ENCODE measurements at regions of chr1 and their contacts with region 1.

Region 1: DNA sequence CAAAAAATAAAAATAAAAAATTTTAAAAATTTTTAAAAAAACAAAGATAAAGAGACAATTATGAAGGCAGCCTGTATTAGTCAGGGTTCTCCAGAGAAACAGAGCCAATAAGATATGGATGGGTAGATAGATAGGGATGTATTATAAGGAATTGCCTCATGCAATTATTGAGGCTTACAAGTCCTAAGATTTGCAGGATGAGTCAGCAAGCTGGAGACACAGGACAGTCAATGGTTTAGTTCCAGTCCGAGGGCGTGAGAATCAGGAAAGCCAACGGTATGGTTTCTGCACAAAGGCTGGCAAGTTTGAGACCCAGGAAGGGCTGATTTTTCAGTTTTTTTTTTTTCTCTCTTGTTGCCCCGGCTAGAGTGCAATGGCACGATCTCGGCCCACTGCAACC is 24.1 kb upstream of the EIF4G3 start:
- DNase-seq: no peak
- H3K4me3 ChIP-seq: no peak overlapping the region
- H3K27ac ChIP-seq: no peak overlapping the region
- H3K4me1 ChIP-seq: no peaks in the 10 kb centered on the region
- H3K27me3 ChIP-seq: peaks cover 0 to 4% of the 10 kb centered on the region in 2 experiments
- CTCF ChIP-seq: no peak
- POLR2A ChIP-seq: no peak

Region 2: DNA sequence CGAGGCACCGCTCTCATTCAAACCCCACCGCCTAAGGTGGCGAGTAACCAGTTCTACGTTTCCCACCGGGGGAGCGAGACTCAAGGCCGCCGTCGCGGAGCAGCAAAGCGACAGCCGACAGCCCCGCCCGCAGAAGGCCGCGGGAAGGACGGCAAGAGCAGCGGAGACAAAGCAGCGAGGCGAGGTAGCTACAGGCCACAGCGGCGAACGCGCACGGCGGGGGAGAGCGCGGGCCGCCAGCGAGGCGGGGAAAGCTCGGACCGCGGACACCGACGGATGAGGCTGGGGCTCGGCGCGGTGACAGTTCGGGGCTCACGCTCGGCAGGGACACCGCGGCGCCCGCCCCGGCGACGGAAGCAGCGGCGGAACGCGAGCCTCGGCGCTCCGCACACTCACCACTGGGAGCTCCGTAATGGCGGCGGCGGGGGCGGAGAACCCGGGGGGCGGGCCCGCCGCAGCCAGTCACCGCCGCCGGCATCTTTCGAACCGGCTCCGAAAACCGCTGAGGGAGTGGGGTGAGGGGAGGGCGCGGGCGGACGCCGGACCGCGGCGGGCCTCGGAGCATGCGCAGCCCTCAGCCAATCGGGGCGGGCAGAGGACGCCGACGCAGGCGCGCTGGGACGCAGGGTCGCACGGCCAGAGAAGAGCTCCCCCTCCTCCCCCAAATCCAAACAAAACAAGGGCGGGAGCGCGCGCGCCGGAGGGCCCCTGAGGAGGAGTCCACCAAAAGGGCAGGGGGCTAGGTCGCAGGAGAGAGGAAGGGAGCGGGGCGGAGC is 414.3 kb before region 1 on chr1:
- CTCF ChIA-PET with region 1: interaction called, 49 read pairs
- POLR2A ChIA-PET with region 1: no interaction called
- dilution Hi-C with region 1: no loop called
- intact Hi-C with region 1: loop called (anchors 1 kb)
- DNase-seq: peak; percentile 96
- H3K4me3 ChIP-seq: peak overlapping the region; percentile 32 to 90 (median 83)
- H3K27ac ChIP-seq: peak overlapping the region; percentile 89
- H3K4me1 ChIP-seq: peaks cover 13% of the 10 kb centered on the region
- H3K27me3 ChIP-seq: no peaks in the 10 kb centered on the region
- CTCF ChIP-seq: no peak
- POLR2A ChIP-seq: peak; percentile 69

Region 3: DNA sequence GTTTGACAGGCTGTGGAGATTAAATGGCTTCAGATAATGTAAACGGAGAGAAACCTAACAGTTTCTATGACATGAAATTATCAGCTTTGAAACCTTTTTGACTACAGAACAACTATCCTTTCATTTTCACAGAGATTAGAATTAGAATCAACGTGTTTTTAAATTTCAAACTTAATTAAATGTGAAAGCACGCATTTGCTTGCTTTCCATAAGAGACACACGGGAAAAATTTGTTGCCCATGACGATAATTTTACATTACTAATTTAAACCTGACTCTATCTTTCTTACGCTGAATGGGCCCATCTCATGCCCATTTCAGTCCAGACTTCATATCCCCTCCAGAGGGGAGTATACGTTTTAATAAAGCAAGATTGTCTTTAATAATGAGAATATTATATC is 322.0 kb before region 1 on chr1:
- CTCF ChIA-PET with region 1: interaction called, 10 read pairs
- POLR2A ChIA-PET with region 1: no interaction called
- dilution Hi-C with region 1: no loop called
- intact Hi-C with region 1: no loop called
- DNase-seq: no peak
- H3K4me3 ChIP-seq: no peak overlapping the region
- H3K27ac ChIP-seq: no peak overlapping the region
- H3K4me1 ChIP-seq: peaks cover 4% of the 10 kb centered on the region
- H3K27me3 ChIP-seq: no peaks in the 10 kb centered on the region
- CTCF ChIP-seq: no peak
- POLR2A ChIP-seq: no peak

Region 4: DNA sequence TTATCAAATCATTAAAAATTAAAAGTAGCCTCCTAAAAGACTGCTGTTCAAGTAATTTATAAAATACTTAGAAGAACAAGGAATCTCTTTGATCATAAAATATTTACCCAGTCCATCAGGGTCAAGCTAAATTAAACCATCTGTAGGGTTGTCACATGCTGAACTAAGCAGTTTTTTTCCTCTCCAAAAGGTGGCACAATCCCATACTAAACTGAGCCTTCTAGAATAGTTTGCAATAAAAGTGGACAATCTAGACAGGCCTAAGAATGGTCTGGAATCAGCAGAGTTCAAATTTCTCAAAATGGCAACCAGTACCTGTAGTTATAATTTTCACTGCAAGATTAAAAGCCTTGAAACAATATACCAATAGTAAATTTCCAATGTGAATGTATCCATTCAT is 218.9 kb before region 1 on chr1:
- CTCF ChIA-PET with region 1: interaction called, 66 read pairs
- POLR2A ChIA-PET with region 1: no interaction called
- dilution Hi-C with region 1: no loop called
- intact Hi-C with region 1: loop called (anchors 1 kb)
- DNase-seq: peak; percentile 48
- H3K4me3 ChIP-seq: no peak overlapping the region
- H3K27ac ChIP-seq: no peak overlapping the region
- H3K4me1 ChIP-seq: peaks cover 9% of the 10 kb centered on the region
- H3K27me3 ChIP-seq: no peaks in the 10 kb centered on the region
- CTCF ChIP-seq: peak in 1 of 2 donors; percentile 11
- POLR2A ChIP-seq: no peak

Region 5: GRCh38 chr1:21034725-21035628 is 165.8 kb before region 1 on chr1:
- CTCF ChIA-PET with region 1: no interaction called
- POLR2A ChIA-PET with region 1: no interaction called
- dilution Hi-C with region 1: no loop called
- intact Hi-C with region 1: no loop called
- DNase-seq: no peak
- H3K4me3 ChIP-seq: no peak overlapping the region
- H3K27ac ChIP-seq: no peak overlapping the region
- H3K4me1 ChIP-seq: no peaks in the 10 kb centered on the region
- H3K27me3 ChIP-seq: no peaks in the 10 kb centered on the region
- CTCF ChIP-seq: no peak
- POLR2A ChIP-seq: no peak

Region 6: DNA sequence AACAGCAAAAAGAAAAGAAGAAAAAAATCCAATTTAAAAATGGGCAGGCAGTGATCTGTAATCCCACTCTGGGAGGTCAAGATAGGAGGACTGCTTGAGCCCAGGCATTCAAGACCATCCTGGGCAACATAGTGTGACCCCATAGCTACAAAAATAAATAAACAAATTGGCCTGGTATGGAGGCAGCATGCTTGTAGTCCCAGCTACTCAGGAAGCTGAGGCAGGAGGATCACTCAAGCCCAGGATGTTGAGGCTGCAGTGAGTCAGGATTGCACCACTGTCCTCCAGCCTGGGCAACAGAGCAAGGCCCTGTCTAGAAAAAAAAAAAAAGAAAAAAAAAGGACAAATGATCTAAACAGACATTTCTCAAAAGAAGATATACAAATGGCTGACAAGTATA is 123.7 kb before region 1 on chr1:
- CTCF ChIA-PET with region 1: interaction called, 33 read pairs
- POLR2A ChIA-PET with region 1: no interaction called
- dilution Hi-C with region 1: no loop called
- intact Hi-C with region 1: loop called (anchors 5 kb)
- DNase-seq: peak; percentile 77
- H3K4me3 ChIP-seq: no peak overlapping the region
- H3K27ac ChIP-seq: peak overlapping the region; percentile 8
- H3K4me1 ChIP-seq: peaks cover 16% of the 10 kb centered on the region
- H3K27me3 ChIP-seq: no peaks in the 10 kb centered on the region
- CTCF ChIP-seq: no peak
- POLR2A ChIP-seq: no peak

Region 7: DNA sequence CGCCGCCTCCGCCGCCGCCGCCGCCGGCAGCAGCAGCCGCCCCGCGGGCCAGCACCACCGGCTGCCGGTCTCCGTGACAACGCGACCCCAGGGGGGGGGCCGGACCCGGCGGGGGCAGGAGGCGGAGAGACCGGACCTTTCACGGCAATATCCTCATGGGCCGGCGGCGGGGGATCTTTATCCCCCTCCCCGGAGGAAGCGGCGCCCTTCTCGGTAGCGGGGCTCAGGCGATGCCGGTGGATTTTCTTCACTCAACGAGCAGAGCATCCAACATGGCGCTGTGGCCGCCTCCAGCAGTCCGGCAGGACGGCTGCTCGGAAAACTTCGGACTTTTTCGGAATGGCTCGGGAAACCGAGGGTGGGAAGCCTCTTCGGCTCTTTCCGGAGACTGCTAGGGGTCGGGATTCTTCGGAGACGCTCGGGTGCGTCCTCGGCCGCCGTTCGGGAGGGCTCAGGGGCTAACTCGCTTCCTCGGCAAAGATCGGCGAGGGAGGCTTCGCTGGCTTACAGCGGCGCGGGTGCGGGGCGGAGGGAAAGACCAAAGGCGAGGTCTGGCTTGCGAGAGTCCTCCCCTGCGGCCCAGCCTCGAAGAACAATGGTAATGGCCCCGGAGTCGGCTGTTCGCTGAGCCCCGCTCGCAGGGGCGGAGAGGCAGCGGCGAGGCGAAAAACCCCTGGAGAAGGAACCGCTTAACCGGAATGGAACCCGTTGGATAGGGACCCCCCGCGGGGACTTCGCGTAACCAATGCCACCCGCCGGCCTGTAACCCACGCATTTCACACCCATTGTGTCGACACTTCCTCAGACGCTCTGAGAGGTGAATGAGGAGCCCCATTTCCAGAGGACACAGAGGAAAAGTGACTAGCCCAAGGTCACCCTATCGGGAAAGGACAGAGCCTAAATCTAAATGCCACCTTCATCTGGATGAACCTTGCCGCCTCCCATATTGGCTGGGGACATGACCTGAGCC is 23.9 kb before region 1 on chr1 and contains the start of gene EIF4G3:
- CTCF ChIA-PET with region 1: interaction called, 17 read pairs
- POLR2A ChIA-PET with region 1: no interaction called
- dilution Hi-C with region 1: no loop called
- intact Hi-C with region 1: no loop called
- DNase-seq: peak; percentile 98
- H3K4me3 ChIP-seq: peak within 1 kb of the TSS; percentile 84 to 100 (median 94)
- H3K27ac ChIP-seq: peak within 1 kb of the TSS; percentile 86
- H3K4me1 ChIP-seq: peaks cover 12% of the 10 kb centered on the region
- H3K27me3 ChIP-seq: no peaks in the 10 kb centered on the region
- CTCF ChIP-seq: no peak
- POLR2A ChIP-seq: peak; percentile 76
- total RNA-seq, gene EIF4G3: 78.5 and 84.0 TPM in 2 replicates

Measured in endothelial cell of umbilical vein (primary cell).